Common myeloid progenitor, CD34-positive (primary cell): ENCODE measurements at regions of chr19 and their contacts with region 1.

Region 1: DNA sequence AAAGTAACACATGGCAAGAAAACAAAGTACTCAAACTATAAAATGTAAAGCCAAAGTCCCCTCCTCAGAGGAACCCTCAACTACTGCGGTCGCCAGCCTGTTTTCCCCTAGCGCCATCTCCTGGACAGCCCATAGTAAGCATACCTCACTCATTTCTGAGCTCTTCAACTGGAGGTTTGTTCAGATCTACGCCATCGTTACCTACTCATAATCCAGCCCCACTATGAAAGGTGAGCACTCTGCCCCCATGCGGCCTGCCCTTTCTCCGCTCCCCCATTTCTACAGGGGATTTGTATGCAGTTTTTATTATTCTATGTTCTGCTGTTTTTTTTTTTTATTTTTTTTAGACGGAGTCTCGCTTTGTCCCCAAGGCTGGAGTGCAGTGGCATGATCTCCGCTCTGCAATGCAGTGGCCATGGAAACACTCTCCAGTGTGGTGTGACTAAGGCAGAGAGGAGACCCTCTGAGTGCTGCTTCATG is 26.2 kb downstream of the OPA3 start:
- DNase-seq: peak; percentile 93 to 96 (median 96)
- H3K4me3 ChIP-seq: no peak overlapping the region
- H3K27ac ChIP-seq: no peak overlapping the region
- H3K4me1 ChIP-seq: peaks cover 0 to 6% (median 1%) of the 10 kb centered on the region in 4 experiments
- H3K27me3 ChIP-seq: no peaks in the 10 kb centered on the region

Region 2: DNA sequence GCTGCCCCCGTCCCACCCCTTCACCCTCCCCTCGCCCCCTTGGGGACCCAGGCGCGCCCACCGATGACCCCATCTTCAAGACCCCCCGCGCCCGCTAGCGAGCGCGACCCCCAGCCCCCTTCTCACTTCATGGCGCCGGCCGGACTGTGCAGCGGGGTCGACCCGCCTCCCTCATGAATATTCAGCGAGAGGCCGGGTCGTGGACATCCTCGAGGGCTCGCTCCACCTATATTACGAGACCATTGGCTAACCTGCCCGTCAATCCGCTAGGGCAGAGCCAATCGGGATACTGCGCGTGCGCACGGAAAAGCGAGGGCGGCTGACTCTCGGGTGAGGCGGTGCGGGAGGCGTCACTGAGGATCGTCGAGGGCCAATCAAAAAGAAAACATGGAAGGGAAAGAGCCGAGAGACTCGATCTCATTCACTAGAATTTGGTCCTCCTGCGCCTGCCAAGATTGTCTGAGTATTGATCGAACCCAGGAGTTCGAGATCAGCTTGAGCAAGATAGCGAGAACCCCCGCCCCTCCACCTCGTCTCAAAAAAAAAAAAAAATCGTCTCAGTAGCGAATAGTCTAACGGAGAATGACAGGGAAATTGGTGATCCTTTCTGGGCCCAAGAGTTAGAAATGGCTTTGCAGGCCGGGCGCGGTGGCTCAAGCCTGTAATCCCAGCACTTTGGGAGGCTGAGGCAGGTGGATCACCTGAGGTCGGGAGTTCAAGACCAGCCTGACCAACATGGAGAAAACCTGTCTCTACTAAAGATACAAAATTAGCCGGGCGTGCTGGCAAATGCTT is 187.8 kb before region 1 on chr19 and contains the start of gene ERCC2:
- CTCF ChIA-PET with region 1: no interaction called
- POLR2A ChIA-PET with region 1: no interaction called
- DNase-seq: peak; percentile 98 to 99 (median 98)
- H3K4me3 ChIP-seq: peak within 1 kb of the TSS; percentile 53 to 90 (median 79)
- H3K27ac ChIP-seq: peak within 1 kb of the TSS; percentile 55 to 83
- H3K4me1 ChIP-seq: peaks cover 0 to 10% (median 5%) of the 10 kb centered on the region in 4 experiments
- H3K27me3 ChIP-seq: no peaks in the 10 kb centered on the region

Region 3: DNA sequence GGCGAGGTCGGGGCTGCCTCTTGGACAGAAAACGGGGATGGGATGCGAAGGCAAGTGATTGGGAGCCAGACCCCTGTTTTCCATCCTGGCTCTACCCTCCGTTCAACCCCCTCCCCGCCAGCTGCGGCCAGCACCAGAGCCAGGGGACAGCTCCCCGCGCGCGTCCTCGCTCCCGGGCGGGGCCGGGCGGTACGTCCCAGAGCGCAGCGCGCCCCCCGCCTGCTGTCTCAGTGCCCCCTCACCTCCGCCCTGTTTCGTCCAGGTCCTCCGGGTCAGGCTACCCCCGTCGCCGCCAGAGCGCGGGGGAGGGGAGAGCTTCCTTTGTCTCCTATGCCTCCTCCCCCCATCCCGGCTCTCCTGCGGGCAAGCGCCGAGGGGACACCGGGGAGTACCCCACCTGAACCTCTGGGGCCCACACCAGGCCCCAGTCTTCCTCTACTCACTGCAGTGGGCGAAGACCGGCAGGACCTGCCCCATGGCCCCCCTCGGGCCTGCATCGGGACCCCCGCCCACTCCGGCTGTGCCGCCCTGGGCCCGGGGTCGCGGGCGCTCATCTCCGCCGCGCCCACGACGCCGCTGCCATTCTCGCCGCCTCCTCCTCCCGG is 62.0 kb before region 1 on chr19:
- CTCF ChIA-PET with region 1: interaction called, 12 read pairs
- POLR2A ChIA-PET with region 1: no interaction called
- DNase-seq: peak in 2 of 3 donors; percentile 51 to 62
- H3K4me3 ChIP-seq: peak overlapping the region; percentile 23 to 80 (median 62)
- H3K27ac ChIP-seq: no peak overlapping the region
- H3K4me1 ChIP-seq: peaks cover 0 to 47% (median 39%) of the 10 kb centered on the region in 4 experiments
- H3K27me3 ChIP-seq: peaks cover 0 to 46% (median 24%) of the 10 kb centered on the region in 5 experiments

Region 4: DNA sequence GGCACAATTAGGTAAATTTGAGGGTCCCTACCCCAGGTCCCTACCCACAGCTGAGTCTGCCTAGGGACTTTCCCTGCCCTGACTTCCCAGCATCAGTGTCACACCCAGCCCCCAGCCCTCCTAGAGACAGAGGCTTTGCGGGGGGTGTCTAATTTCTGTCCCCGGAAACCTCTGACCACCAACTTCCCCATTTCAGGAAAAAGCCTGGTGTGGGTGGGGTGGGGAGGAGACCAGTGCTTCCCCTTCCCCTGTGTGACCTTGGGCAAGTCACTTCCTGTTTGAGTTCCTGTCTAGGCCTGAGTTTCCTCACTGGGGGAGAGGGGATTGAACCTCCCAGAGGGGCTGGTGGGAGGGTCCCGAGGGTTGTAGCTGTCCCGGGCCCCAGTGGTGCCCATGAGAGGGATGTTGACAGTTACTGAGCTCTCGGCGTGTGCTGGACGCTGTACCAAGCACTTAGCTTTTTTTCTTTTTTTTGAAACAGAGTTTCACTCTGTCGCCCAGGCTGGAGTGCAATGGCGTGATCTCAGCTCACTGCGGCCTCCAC is 43.3 kb before region 1 on chr19:
- CTCF ChIA-PET with region 1: interaction called, 23 read pairs
- POLR2A ChIA-PET with region 1: no interaction called
- DNase-seq: peak; percentile 72 to 84 (median 82)
- H3K4me3 ChIP-seq: peak overlapping the region in 3 of 7 experiments; percentile 24 to 43 (median 38)
- H3K27ac ChIP-seq: peak overlapping the region; percentile 27 to 35
- H3K4me1 ChIP-seq: peaks cover 8 to 55% (median 41%) of the 10 kb centered on the region in 4 experiments
- H3K27me3 ChIP-seq: no peaks in the 10 kb centered on the region

Region 5: DNA sequence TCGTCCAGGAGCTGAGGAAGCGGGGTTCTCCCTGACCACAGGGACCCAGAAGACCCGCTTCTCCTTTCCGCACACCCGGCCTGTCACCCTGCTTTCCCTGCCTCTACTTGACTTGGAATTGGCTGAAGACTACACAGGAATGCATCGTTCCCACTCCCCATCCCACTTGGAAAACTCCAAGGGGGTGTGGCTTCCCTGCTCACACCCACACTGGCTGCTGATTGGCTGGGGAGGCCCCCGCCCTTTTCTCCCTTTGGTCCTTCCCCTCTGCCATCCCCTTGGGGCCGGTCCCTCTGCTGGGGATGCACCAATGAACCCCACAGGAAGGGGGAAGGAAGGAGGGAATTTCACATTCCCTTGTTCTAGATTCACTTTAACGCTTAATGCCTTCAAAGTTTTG is 32.3 kb before region 1 on chr19:
- CTCF ChIA-PET with region 1: interaction called, 47 read pairs
- POLR2A ChIA-PET with region 1: interaction called, 7 read pairs
- DNase-seq: no peak
- H3K4me3 ChIP-seq: no peak overlapping the region
- H3K27ac ChIP-seq: no peak overlapping the region
- H3K4me1 ChIP-seq: peaks cover 0 to 12% (median 5%) of the 10 kb centered on the region in 4 experiments
- H3K27me3 ChIP-seq: peaks cover 0 to 10% (median 3%) of the 10 kb centered on the region in 5 experiments

Region 6: GRCh38 chr19:45547976-45548609 is 10.3 kb before region 1 on chr19:
- CTCF ChIA-PET with region 1: interaction called, 11 read pairs
- POLR2A ChIA-PET with region 1: no interaction called
- DNase-seq: no peak
- H3K4me3 ChIP-seq: no peak overlapping the region
- H3K27ac ChIP-seq: no peak overlapping the region
- H3K4me1 ChIP-seq: peaks cover 5 to 20% (median 11%) of the 10 kb centered on the region in 4 experiments
- H3K27me3 ChIP-seq: no peaks in the 10 kb centered on the region

Region 7: GRCh38 chr19:45638930-45639729 is 80.7 kb after region 1 on chr19 and contains the start of gene EML2:
- CTCF ChIA-PET with region 1: no interaction called
- POLR2A ChIA-PET with region 1: no interaction called
- DNase-seq: peak; percentile 29 to 51 (median 41)
- H3K4me3 ChIP-seq: peak within 1 kb of the TSS; percentile 64 to 91 (median 79)
- H3K27ac ChIP-seq: peak within 1 kb of the TSS; percentile 40 to 78
- H3K4me1 ChIP-seq: peaks cover 0 to 44% (median 42%) of the 10 kb centered on the region in 4 experiments
- H3K27me3 ChIP-seq: peaks cover 0 to 8% (median 5%) of the 10 kb centered on the region in 5 experiments